ENCODE measurements at regions of chr15 and their contacts with region 1.

Region 1: DNA sequence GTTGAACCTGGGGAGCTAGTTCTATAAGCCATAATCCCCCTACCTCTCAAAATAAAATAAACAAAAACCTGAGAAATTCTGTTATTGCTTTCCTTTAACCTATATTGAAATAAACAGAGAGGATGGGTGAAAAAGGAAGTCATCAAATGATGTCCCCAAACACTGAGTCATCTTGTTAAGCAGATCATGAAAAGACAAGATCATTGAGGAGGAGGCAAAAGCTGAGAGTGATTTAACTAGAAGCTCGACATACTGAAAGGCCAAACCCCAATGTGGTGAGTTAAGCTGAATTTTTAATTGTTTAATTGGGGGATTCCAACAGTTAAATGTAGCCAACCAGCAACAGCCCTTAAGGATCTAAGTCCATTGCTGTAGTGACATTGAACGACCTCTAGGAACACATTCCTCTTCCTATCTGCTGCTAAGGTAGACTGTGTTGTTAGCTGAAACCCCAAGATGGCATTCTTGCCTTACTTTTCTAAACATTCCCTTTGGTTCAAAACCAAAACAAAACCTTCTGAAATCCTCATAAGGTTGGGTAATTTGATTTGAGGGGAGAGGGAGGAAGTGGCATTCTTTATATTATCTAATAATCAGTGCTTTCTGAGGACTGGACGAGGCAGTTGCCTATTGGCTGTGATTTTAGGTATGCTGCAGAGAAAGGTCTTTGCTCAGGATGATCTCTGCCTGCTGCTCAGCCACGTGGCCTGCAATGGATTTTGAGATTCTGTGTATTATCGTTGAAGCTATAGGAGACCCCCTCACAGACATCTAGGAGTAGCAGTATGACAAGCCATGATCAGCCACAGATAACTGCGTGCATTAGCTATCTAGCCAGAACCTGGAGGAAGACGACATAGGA is 62.7 kb upstream of the BNIP2 start:
- DNase-seq: no peak
- CTCF ChIP-seq: no peak

Region 2: DNA sequence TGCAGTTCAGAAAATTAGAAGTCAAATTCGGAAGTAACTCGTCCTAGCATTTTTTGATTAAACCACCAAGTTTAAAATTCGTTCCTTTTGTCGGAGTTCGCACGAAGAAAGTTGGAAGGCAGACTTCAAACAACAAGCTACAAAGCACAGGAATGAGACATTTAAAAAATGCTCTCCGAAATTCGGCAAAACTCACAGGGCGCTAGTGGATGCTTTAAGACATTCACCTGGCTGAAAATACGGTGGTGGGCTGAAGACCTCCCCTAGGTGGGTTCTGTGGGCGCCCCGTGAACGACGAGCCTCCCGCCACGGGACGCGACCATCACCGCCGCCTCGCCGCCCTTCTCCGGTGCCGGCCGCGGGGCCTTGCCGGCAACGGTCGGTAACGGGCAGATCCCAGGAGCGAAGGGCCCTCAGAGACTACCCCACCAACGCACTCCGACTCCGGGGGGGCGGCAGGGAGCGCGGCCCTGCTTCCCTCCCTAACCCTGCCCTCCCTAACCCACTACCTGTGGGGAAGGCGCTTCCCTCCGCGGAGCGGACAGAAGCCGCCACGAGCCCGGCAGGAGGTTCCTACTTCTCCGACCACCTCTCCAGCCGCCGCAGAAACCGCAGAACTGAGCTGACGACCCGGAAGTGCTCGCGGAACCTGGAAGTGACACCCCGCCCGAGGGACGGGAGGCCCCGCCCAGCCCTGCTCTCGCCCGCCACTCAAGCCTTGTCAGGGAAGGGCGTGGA is 94.7 kb before region 1 on chr15 and contains the start of gene GTF2A2:
- CTCF ChIA-PET with region 1: no interaction called
- POLR2A ChIA-PET with region 1: no interaction called
- DNase-seq: peak; percentile 95
- CTCF ChIP-seq: no peak

Region 3: DNA sequence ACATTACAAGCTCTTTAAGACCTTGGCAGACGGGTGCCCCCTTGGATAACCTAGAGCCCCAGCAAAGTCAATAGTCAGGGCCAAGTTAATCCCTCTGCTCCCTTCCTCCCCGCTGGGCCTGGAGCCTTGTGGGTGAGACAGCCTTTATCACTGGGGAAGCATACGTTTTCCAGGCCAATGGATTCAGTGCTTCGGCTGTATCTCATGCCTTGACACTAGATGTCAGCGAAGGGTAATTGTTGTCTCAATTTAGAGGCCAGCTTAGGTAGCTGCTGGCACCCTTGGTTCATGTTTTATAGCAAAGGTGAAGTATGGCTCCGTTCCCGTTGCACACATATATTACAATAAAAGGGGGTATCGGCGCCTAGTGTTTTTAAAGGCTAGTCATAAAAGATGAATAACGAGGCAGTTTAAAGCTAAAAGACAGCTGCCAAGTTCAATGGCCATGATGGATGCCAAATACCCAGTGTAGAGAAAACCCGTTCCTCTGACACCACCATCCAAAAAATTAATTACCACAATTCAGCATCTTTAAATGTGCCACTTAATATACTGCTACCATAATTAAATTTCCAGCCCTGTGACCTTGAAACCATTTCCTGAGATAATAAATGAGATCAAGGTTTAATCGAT is 10.4 kb before region 1 on chr15:
- CTCF ChIA-PET with region 1: interaction called, 10 read pairs
- POLR2A ChIA-PET with region 1: no interaction called
- DNase-seq: no peak
- CTCF ChIP-seq: no peak

Measured in GM10248 (cell line).